OCI-LY7 (cell line): ENCODE measurements at regions of chr11 and their contacts with region 1.

Region 1: GRCh38 chr11:25981998-25982397 is 349.9 kb upstream of the ANO3 start:
- DNase-seq: peak; percentile 87
- H3K4me3 ChIP-seq: peak overlapping the region; percentile 17
- H3K27ac ChIP-seq: peak overlapping the region; percentile 36
- H3K4me1 ChIP-seq: peaks cover 13% of the 10 kb centered on the region
- CTCF ChIP-seq: peak; percentile 90

Region 2: GRCh38 chr11:25547292-25547691 is 434.7 kb before region 1 on chr11:
- CTCF ChIA-PET with region 1: no interaction called
- POLR2A ChIA-PET with region 1: no interaction called
- intact Hi-C with region 1: no loop called
- DNase-seq: no peak
- H3K4me3 ChIP-seq: no peak overlapping the region
- H3K27ac ChIP-seq: no peak overlapping the region
- H3K4me1 ChIP-seq: no peaks in the 10 kb centered on the region
- CTCF ChIP-seq: no peak

Region 3: DNA sequence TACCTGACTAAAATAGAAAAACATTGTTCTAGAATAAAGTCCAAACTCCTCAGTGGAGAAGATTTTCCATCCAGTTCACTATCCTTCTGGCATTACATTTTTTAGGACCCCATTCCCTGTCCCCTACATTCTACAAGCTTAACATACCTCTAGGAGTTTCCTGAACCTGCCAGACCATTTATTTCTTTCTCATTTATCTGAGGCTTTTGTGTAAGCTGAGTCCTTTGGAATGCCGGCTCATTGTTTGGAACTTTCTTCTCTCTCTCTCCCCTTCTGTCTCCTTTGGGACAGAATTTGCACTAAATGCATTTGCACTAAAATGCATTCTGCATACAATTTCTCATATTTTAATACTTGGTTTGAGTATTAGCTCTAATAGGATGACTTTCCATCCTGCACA is 43.0 kb before region 1 on chr11:
- CTCF ChIA-PET with region 1: no interaction called
- POLR2A ChIA-PET with region 1: no interaction called
- intact Hi-C with region 1: no loop called
- DNase-seq: no peak
- H3K4me3 ChIP-seq: no peak overlapping the region
- H3K27ac ChIP-seq: no peak overlapping the region
- H3K4me1 ChIP-seq: no peaks in the 10 kb centered on the region
- CTCF ChIP-seq: no peak

Region 4: DNA sequence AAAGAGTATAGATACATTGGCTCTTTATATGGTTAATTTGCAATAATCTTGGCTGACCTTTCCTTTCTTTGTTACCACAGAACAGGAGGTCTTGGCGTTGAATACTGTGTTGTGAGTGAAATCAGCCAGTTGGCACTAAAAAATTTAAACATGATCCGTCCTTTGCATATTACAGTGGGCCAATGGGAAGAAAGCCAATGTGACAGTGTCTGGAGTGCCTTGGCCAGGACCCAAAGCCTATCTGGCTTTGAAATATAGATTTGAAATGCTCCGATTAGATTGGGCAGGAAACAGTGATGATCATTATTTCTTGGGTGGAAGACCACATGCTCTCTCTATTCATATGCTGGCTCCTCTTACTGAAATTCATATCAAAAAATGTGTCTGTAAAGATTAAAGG is 10.3 kb after region 1 on chr11:
- CTCF ChIA-PET with region 1: interaction called, 5 read pairs
- POLR2A ChIA-PET with region 1: interaction called, 12 read pairs
- intact Hi-C with region 1: no loop called
- DNase-seq: no peak
- H3K4me3 ChIP-seq: no peak overlapping the region
- H3K27ac ChIP-seq: no peak overlapping the region
- H3K4me1 ChIP-seq: peaks cover 8% of the 10 kb centered on the region
- CTCF ChIP-seq: no peak

Region 5: DNA sequence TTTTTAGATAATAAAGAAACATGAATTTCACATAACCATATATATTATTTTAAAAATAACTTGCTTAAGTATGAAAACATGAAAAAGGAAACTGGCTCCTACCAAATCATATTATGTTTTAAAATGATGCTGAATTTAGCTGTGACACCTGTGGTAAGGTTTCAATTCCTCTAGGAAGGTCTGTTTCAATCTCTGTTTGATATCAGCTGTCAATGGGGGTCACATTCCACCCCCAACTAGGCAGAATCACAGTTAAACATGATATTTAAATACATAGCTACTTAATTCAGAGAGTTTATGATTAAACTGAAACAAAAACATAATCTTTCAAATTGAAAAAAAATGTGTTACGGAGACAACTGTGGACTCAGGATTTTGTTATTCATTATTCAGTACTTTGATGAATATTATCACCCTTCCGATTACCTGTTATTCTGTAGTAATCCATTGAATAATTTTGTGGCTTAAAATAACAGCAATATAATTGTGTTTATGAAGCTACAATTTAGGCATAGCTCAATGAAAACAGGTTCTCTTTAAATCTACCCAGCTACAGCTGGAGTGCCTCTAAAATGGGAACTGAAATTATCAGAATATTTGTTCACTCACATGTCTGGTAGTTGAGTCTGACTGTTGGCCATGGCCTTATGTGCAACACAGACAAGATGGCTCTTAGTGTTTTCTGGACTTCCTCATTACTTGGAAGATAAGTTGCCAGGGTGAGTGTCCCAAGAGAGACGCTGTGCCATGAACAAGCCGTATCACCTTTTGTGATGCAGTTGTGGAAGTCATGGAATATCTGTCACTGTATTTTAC is 105.3 kb after region 1 on chr11:
- CTCF ChIA-PET with region 1: interaction called, 4 read pairs
- POLR2A ChIA-PET with region 1: interaction called, 6 read pairs
- intact Hi-C with region 1: loop called (anchors 1 kb)
- DNase-seq: peak; percentile 91
- H3K4me3 ChIP-seq: peak overlapping the region; percentile 46
- H3K27ac ChIP-seq: peak overlapping the region; percentile 99
- H3K4me1 ChIP-seq: peaks cover 82% of the 10 kb centered on the region
- CTCF ChIP-seq: no peak

Region 6: DNA sequence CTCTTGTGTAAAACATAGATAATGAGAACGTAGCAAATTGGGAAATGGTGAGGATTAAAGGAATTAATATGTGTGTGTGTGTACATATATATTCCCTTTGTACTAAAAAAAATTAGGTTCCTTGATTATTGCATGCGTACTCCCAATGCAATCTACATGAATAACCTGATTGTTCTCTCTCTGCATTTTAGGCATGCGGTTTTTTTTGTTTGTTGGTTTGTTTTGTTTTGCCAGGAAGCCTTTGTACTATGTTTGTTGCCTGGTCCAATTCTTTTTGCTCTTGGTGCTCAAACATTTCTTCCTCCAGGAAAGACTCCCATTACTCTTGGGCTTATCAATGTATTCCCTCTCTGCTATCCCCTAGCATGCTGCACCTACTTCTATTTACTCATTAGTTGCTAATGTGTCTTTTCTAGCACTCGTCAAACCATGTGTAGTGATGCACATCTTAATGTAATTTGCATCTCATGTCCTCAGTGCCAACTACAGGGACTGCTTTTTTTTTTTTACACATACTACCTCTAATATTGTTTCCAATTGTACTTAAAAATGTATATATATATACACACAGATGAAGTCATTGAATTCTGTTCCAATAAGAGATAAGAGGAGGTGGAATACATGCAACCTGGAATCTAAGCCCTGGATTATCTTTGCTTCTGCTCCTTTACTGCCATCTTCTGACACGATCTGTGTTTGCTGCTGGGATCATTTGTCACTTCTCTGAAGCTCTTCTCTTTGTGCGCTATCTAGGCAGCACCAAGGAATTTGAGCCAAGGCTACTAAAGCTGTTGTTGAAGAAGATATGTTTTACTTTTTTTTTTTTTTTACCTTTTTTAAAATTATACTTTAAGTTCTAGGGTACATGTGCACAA is 152.7 kb after region 1 on chr11:
- CTCF ChIA-PET with region 1: interaction called, 44 read pairs
- POLR2A ChIA-PET with region 1: interaction called, 57 read pairs
- intact Hi-C with region 1: loop called (anchors 1 kb)
- DNase-seq: peak; percentile 72
- H3K4me3 ChIP-seq: no peak overlapping the region
- H3K27ac ChIP-seq: peak overlapping the region; percentile 10
- H3K4me1 ChIP-seq: peaks cover 19% of the 10 kb centered on the region
- CTCF ChIP-seq: peak; percentile 87

Region 7: GRCh38 chr11:26143566-26144290 is 161.7 kb after region 1 on chr11:
- CTCF ChIA-PET with region 1: interaction called, 3 read pairs
- POLR2A ChIA-PET with region 1: interaction called, 14 read pairs
- intact Hi-C with region 1: no loop called
- DNase-seq: no peak
- H3K4me3 ChIP-seq: no peak overlapping the region
- H3K27ac ChIP-seq: no peak overlapping the region
- H3K4me1 ChIP-seq: no peaks in the 10 kb centered on the region
- CTCF ChIP-seq: no peak

Region 8: GRCh38 chr11:26227296-26227695 is 245.3 kb after region 1 on chr11:
- CTCF ChIA-PET with region 1: interaction called, 10 read pairs
- POLR2A ChIA-PET with region 1: interaction called, 10 read pairs
- intact Hi-C with region 1: loop called (anchors 1 kb)
- DNase-seq: peak; percentile 82
- H3K4me3 ChIP-seq: no peak overlapping the region
- H3K27ac ChIP-seq: peak overlapping the region; percentile 38
- H3K4me1 ChIP-seq: peaks cover 24% of the 10 kb centered on the region
- CTCF ChIP-seq: peak; percentile 93

Region 9: GRCh38 chr11:26276798-26277424 is 294.9 kb after region 1 on chr11:
- CTCF ChIA-PET with region 1: no interaction called
- POLR2A ChIA-PET with region 1: no interaction called
- intact Hi-C with region 1: loop called (anchors 1 kb)
- DNase-seq: peak; percentile 71
- H3K4me3 ChIP-seq: no peak overlapping the region
- H3K27ac ChIP-seq: no peak overlapping the region
- H3K4me1 ChIP-seq: no peaks in the 10 kb centered on the region
- CTCF ChIP-seq: peak; percentile 100